Cardiac septum (tissue), 1 donor: ENCODE measurements at regions of chr6 and their contacts with region 1.

Region 1: GRCh38 chr6:3068329-3069214 is at the start of gene RIPK1:
- DNase-seq: peak; percentile 98
- total RNA-seq, gene RIPK1: 8.2 TPM

Region 2: DNA sequence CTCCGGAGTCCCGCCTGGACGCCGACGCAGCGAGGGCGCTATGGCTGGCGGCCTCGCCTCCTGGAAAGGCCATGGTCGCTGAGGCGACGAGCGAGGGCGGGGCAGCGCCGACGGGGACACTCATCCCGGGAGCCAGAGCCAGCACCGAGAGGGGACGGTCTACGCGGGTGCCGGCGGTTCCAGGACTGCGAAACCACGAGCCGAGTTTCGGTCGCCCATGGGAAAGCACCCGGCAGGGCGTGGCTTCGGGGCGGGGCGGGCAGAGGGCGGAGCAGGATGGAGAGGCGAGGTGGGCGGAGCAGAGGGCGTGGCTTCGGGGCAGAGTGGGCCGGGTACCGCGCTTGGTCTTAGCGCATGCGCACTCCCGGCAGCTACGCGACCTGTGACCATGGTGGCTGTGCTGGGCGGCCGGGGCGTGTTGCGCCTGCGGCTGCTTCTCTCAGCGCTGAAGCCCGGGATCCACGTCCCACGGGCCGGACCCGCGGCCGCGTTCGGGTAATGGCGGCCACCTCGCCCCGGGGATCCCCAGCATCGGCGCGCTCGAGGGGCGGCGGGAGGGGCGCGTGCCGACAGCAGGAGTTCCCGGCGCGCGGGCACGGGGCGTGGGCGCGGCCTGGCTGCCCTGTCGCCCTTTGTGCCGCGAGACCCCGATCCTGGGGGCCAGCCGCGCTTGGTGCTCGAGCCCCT is 49.9 kb after region 1 on chr6 and contains the start of gene BPHL:
- intact Hi-C with region 1: loop called (anchors 5 kb)
- DNase-seq: peak; percentile 99
- total RNA-seq, gene BPHL: 12.0 TPM

Region 3: DNA sequence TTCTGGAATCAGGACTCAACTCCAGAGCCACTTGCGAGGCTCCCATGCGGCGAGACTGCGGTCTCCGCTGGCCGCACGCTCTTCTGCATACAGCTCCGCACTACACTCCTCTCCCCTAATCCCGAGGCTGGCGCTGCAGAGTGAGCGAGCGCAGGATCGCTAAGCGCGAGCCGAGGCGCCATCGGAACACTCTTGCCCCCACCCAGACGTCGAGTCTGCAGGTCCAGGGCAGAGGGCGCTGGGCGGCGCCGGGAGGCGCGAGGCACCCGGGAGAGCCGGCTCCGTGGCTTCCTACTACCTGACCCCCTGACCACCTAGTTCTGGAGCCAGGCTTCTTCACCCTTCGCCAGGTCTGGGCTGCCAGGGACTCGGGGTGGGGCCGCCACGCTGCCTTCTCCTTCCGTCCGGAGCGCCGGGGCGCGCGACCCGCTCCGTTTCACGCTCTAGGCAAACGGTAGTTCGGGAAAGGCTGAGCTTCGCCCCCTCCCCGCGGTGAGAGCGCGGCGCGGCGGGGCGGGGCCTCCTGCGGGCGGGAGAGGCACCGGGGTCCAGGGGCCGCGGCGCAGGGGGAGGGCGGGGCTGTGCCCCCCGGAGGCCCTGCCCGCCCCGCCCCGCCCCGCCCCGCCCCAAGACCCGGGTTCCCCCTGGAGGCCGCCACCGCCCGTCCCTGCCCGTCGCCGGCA is 94.1 kb after region 1 on chr6:
- intact Hi-C with region 1: loop called (anchors 5 kb)
- DNase-seq: peak; percentile 81